PC-9 (cell line): ENCODE measurements at regions of chr7 and their contacts with region 1.

Region 1: DNA sequence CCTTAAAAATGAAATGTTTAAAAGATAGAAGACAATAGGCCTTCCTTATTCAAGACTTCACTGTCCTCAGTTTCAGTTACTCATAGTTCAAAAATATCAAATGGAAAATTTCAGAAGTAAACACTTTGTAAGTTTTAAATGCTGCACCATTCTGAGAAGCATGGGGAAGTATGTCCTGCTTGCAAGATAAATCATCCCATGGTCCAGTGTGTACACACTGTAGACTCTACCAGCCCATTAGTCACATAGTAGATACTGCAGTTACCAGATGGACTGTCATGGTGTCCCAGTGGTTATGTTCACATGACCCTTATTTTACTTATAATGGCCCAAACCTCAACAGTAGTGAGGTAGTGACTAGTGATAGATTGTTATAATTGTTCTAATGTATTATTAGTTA is 69.5 kb downstream of the PTPN12 start:
- DNase-seq: no peak
- H3K4me3 ChIP-seq: no peak overlapping the region
- H3K27ac ChIP-seq: 0 out of 2 replicates have a peak overlapping the region, but pooled peaks have one; percentile 5
- H3K4me1 ChIP-seq: peaks cover 16% of the 10 kb centered on the region
- H3K27me3 ChIP-seq: no peaks in the 10 kb centered on the region
- CTCF ChIP-seq: no peak

Region 2: DNA sequence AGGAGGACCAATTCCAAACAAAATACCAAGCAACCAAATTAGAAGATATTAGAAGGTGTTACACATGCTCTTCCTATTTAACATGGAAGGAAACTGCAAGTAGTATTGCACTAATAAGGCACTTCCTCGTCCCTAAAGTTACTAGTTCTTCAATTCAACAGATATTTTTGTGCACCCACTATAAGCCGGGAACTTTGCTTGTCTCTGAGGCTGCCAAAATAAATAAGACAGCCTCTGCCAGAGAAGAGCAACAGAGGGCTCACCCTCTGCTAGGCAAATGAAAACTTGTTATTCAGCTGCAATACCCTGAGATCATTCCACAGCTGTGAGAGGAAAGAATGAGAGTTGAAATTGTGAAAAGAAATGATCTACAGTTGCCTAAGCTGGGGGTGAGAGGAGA is 153.0 kb before region 1 on chr7:
- CTCF ChIA-PET with region 1: no interaction called
- POLR2A ChIA-PET with region 1: no interaction called
- intact Hi-C with region 1: no loop called
- DNase-seq: no peak
- H3K4me3 ChIP-seq: no peak overlapping the region
- H3K27ac ChIP-seq: no peak overlapping the region
- H3K4me1 ChIP-seq: peaks cover 11% of the 10 kb centered on the region
- H3K27me3 ChIP-seq: no peaks in the 10 kb centered on the region
- CTCF ChIP-seq: no peak

Region 3: GRCh38 chr7:77504951-77505350 is 101.6 kb before region 1 on chr7:
- CTCF ChIA-PET with region 1: no interaction called
- POLR2A ChIA-PET with region 1: no interaction called
- intact Hi-C with region 1: no loop called
- DNase-seq: no peak
- H3K4me3 ChIP-seq: no peak overlapping the region
- H3K27ac ChIP-seq: no peak overlapping the region
- H3K4me1 ChIP-seq: peaks cover 7% of the 10 kb centered on the region
- H3K27me3 ChIP-seq: no peaks in the 10 kb centered on the region
- CTCF ChIP-seq: no peak

Region 4: DNA sequence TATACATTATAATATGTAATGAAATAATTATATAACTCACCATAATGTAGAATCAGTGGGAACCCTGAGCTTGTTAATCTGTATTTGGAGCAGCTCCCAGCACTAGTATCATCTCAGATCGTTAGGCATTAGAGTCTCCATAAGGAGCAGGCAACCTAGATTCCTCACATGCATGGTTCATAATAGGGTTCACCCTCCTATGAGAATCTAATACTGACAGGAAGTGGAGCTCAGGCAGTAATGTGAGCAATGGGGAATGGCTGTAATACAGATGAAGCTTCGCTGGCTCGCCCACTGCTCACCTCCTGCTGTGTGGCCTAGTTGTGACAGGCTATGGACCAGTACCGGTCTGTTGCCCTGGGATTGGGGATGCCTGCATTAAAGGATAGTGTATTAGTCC is 139.2 kb after region 1 on chr7:
- CTCF ChIA-PET with region 1: interaction called, 11 read pairs
- POLR2A ChIA-PET with region 1: no interaction called
- intact Hi-C with region 1: no loop called
- DNase-seq: no peak
- H3K4me3 ChIP-seq: no peak overlapping the region
- H3K27ac ChIP-seq: no peak overlapping the region
- H3K4me1 ChIP-seq: no peaks in the 10 kb centered on the region
- H3K27me3 ChIP-seq: no peaks in the 10 kb centered on the region
- CTCF ChIP-seq: no peak